ENCODE measurements at regions of chr12 and their contacts with region 1.

Region 1: DNA sequence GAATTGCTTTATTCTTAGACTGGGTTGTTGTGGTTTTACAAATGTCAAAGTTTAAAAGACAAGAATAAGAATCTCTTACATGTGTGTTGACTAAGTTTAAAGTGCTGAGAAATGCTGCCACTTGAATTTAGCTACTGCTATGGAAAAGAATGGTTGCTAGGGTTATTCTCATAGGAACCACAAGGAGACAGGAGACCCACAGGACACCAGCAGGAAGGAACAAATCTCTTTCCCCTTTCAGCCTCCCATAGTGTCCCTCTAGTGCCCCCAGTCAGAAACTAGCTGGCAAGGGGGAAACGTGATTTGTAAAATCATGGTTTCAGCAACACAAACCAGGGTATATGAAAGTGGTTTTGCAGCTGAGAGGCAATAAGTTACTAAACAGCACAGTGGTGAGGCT is 102.7 kb downstream of the ST8SIA1 start:
- DNase-seq: peak; percentile 18
- H3K4me3 Mint-ChIP-seq: no peak overlapping the region
- H3K27ac Mint-ChIP-seq: no peak overlapping the region
- H3K4me1 Mint-ChIP-seq: peaks cover 36% of the 10 kb centered on the region
- H3K27me3 Mint-ChIP-seq: peaks cover 3% of the 10 kb centered on the region
- CTCF ChIP-seq: no peak

Region 2: DNA sequence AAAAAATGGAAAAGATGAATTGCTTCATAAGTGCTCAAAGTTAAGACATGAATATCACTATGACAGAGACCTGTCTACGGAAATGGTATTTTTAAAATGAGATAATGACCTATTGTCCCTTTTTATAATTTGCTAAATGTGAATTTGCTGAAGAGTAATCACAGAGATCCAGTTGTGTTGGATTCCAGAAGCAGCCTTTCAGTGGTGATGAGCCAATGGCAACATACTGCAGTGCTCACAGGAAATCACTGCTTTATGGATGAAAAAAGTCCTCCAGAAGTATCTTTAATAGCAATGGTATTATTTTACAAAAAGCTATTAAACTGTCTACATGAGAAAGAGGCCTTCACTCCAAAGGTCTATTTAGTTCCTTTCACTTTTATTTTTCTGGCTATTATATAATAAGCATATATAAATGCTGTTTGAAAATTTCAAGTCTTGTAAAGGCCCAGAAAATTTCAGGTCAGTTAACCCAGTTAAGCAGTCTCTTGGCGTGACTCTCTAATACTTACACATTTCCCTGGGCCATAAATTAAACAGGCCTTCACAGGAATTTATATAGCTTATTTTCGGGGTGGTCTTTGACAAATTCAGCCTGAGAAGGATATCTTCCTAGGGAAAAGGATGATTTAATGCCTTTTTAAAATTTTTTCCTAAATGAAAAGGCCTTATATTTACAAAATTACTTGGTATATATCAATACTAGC is 512.7 kb before region 1 on chr12:
- CTCF ChIA-PET with region 1: no interaction called
- POLR2A ChIA-PET with region 1: no interaction called
- intact Hi-C with region 1: no loop called
- DNase-seq: no peak
- H3K4me3 Mint-ChIP-seq: no peak overlapping the region
- H3K27ac Mint-ChIP-seq: no peak overlapping the region
- H3K4me1 Mint-ChIP-seq: no peaks in the 10 kb centered on the region
- H3K27me3 Mint-ChIP-seq: peaks cover 39% of the 10 kb centered on the region
- CTCF ChIP-seq: no peak

Region 3: DNA sequence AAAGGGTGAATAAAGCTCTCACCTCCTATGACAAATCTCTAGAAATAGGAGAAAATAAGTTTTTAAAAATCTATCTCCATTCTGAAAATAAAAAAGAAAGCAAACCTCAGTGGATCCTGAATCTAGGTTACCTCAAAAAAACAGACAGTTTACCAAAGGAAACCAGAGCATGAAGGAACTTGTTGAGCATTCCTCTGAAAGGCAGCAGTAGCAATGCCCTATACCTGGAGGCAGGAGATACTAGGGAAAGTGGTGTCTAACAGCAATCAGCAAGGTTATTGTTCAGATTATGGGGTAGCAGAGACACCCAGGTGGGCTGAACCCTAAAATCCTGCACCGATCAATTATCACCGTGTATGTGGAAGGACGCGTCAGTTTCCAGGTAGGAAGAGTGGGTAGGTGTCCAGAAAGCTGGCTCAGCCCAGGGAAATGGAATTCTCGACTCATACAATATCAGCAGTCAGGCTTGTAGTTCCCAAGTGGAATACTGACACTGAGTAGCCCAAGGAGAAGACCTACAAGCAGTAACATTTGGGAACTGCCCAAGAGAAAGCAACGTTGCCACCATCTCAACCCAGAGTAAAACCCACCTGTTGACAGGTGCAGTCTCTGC is 25.6 kb before region 1 on chr12:
- CTCF ChIA-PET with region 1: no interaction called
- POLR2A ChIA-PET with region 1: no interaction called
- intact Hi-C with region 1: no loop called
- DNase-seq: no peak
- H3K4me3 Mint-ChIP-seq: no peak overlapping the region
- H3K27ac Mint-ChIP-seq: no peak overlapping the region
- H3K4me1 Mint-ChIP-seq: no peaks in the 10 kb centered on the region
- H3K27me3 Mint-ChIP-seq: no peaks in the 10 kb centered on the region
- CTCF ChIP-seq: no peak

Region 4: DNA sequence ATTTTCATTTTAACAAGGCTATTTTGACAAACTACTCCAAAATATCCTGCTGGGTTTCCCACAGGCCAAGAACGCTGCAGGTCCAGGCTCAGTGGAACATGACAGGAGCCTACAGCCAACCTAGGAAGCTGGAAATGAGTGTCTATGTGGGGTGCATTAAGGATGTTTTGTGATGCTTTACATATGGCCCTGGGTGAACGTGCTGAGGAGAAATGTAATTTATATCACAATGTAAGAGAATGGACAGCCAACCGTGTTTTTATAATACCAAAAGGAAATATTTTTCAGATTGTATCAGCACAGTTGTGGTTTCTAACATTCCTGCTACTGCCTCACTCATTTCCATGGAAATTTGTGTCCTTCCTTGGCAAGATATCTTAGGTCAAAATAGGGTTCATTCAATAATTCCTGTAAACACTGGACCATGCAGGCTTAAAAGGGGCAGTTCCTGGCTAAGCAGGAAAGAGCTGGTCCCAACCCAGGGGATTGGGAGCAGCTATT is 51.2 kb after region 1 on chr12:
- CTCF ChIA-PET with region 1: interaction called, 3 read pairs
- POLR2A ChIA-PET with region 1: interaction called, 11 read pairs
- intact Hi-C with region 1: no loop called
- DNase-seq: peak; percentile 76
- H3K4me3 Mint-ChIP-seq: no peak overlapping the region
- H3K27ac Mint-ChIP-seq: peak overlapping the region; percentile 88
- H3K4me1 Mint-ChIP-seq: peaks cover 37% of the 10 kb centered on the region
- H3K27me3 Mint-ChIP-seq: no peaks in the 10 kb centered on the region
- CTCF ChIP-seq: no peak

Measured in MCF 10A (cell line).